Activated CD4-positive, alpha-beta T cell treated with anti-CD3 and anti-CD28 coated beads, Interleukin-2, amount 10 ng/mL, durations not matched to agents 24 days and 14 days (primary cell): ENCODE measurements at regions of chr1 and their contacts with region 1.

Region 1: GRCh38 chr1:224266105-224266935 is 63.7 kb downstream of the NVL start:
- DNase-seq: no peak
- H3K4me3 Mint-ChIP-seq: no peak overlapping the region
- H3K27ac Mint-ChIP-seq: peak overlapping the region; percentile 66
- H3K4me1 Mint-ChIP-seq: peaks cover 42% of the 10 kb centered on the region
- H3K27me3 Mint-ChIP-seq: no peaks in the 10 kb centered on the region

Region 2: GRCh38 chr1:223886516-223886921 is 379.8 kb before region 1 on chr1:
- intact Hi-C with region 1: no loop called
- DNase-seq: no peak
- H3K4me3 Mint-ChIP-seq: no peak overlapping the region
- H3K27ac Mint-ChIP-seq: no peak overlapping the region
- H3K4me1 Mint-ChIP-seq: no peaks in the 10 kb centered on the region
- H3K27me3 Mint-ChIP-seq: no peaks in the 10 kb centered on the region

Region 3: GRCh38 chr1:224235813-224236493 is 30.4 kb before region 1 on chr1:
- intact Hi-C with region 1: no loop called
- DNase-seq: no peak
- H3K4me3 Mint-ChIP-seq: no peak overlapping the region
- H3K27ac Mint-ChIP-seq: no peak overlapping the region
- H3K4me1 Mint-ChIP-seq: peaks cover 2% of the 10 kb centered on the region
- H3K27me3 Mint-ChIP-seq: no peaks in the 10 kb centered on the region

Region 4: DNA sequence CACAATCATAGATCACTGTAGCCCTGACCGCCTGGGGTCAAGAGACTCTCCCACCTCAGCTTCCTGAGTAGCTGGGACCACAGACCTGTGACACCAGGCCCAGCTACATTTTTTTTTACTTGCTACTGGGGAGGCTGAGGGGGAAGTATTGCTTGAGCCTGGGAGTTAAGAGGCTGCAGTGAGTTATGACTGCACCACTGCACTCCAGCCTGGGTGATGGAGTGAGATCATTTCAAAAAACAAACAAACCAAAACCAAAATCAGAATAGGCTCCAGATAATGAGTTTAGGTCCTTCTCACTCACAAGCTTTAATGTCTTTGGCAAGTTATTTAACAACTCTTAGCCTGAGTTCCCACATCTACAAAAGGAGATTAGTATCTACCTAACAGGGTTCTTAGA is 145.4 kb after region 1 on chr1:
- intact Hi-C with region 1: loop called (anchors 10 kb)
- DNase-seq: no peak
- H3K4me3 Mint-ChIP-seq: no peak overlapping the region
- H3K27ac Mint-ChIP-seq: no peak overlapping the region
- H3K4me1 Mint-ChIP-seq: peaks cover 14% of the 10 kb centered on the region
- H3K27me3 Mint-ChIP-seq: no peaks in the 10 kb centered on the region